Activated T-helper 1 cell treated with anti-CD3 and anti-CD28 coated beads, Interleukin-12 subunit alpha, Interleukin-12 subunit beta, Interleukin-2, Interleukin-4 antibody, amounts not matched to agents 30 ng/mL and 10 ng/mL and 1 ng/mL, durations not matched to agents 14 hours and 24 hours and 36 hours (primary cell): ENCODE measurements at regions of chr15 and their contacts with region 1.

Region 1: DNA sequence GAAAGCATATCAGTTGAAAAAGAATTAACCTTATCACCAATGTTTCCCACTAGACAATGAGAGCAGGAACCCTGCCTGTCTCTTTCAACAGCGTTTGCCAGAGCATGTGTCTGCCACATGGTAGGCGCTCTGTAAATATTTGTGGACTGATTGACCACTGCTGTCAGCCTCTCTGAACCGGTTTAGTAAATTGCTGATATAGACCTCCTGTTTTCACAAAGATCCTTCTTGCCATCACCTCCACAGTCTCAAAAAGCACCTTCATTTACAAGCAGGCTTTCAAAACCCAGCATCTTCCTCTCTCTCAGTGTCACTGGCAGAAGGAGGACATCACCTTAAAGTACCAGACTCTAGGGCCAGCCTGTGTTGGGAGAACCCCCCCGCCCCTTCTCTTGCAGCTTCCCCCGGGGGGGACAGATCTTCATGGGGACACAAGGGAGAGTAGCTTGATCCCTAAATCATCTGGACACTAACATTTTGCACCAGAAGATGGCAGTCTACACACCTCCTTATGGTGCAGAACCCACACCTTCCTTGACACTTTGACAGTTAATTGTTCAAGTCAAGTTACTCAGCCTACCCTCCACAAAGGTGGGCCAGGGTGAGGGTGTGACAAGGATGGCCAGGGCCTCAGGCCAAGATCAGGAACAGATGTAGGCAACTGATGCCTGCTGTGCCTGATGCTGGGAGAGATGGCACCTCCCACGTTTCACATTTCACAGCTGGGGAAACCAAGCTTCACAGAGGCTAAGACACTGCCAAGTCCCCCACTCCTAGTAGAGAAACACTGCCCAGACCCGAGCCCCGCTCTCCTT is 37.8 kb upstream of the USP3 start:
- DNase-seq: peak; percentile 44
- H3K4me3 Mint-ChIP-seq: no peak overlapping the region
- H3K27ac Mint-ChIP-seq: no peak overlapping the region
- H3K4me1 Mint-ChIP-seq: peaks cover 20% of the 10 kb centered on the region
- H3K27me3 Mint-ChIP-seq: peaks cover 7% of the 10 kb centered on the region

Region 2: DNA sequence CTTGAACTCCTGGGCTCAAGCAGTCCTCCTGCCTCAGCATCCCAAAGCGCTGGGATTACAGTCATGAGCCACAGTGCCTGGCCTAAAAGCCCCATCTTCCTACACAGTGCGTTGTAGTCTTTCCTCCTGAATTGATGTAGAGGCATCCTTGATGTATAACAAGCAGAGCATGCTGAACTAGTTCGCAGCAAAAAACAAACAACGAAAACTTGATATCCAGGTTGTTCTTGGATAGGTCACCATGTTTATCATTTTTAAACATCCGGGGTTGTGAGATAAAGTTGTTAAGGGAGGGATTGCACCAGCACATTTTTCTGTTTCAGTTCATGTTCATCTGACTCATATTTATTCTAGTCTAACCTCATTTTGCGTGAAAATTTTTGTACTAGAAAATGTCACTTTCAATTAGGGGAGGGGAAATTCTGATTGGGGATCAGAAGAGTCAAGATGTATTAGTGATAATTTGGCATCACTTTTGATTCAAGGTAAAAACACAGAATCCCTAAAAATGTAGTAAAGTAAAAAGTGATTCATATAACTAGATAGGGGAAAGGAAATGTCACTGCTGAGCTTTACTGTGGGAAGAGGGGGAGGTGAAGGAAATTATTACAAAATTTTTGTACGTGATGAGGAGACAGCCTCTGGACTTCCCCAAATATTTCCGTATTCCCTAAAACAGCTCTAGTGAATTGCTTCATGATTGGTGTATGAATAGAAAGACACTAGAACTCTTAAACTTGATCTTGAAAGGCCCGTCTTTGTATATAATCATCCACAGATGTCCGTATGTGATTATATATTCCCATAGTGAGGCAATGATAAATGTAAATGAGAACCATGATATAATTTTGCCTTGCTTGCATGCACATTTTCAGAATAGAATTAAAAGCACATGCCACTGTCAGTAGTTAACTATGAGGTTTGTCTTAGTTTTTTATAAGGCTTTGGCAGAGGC is 254.3 kb before region 1 on chr15:
- intact Hi-C with region 1: loop called (anchors 2 kb)
- DNase-seq: no peak
- H3K4me3 Mint-ChIP-seq: peak overlapping the region; percentile 79
- H3K27ac Mint-ChIP-seq: peak overlapping the region; percentile 98
- H3K4me1 Mint-ChIP-seq: peaks cover 68% of the 10 kb centered on the region
- H3K27me3 Mint-ChIP-seq: no peaks in the 10 kb centered on the region

Region 3: DNA sequence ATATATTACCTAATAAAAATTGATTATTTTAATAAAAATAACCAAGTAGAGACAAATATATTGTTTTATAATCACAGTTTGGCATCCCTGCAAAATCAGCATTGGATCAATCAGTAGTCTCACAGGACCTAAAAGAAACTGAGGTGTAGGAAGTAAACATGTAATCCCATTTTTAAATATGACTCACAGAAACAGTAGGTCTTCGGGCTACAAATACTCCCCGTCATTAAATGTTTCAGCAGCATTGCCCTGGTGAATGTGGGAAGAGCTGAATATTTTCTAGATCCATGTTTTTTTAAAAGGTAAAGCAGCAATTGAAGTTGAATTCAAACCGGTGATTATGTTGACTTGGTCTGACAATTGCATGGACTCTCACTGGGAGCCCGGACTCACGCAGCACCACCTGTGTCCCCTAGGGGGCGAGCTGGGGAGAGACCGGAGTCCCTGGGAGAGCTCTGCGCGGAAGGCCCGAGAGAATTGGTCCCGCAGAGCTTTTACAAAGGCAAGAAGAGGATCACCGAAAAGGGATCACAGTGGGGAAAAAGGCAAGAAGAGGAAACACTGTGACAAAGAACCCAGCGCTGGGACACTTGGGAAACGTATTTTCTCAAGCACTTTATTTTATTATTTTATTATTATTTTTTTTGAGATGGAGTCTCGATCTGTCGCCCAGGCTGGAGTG is 20.6 kb after region 1 on chr15:
- intact Hi-C with region 1: loop called (anchors 1 kb)
- DNase-seq: peak; percentile 82
- H3K4me3 Mint-ChIP-seq: peak overlapping the region; percentile 13
- H3K27ac Mint-ChIP-seq: peak overlapping the region; percentile 40
- H3K4me1 Mint-ChIP-seq: peaks cover 49% of the 10 kb centered on the region
- H3K27me3 Mint-ChIP-seq: no peaks in the 10 kb centered on the region

Region 4: DNA sequence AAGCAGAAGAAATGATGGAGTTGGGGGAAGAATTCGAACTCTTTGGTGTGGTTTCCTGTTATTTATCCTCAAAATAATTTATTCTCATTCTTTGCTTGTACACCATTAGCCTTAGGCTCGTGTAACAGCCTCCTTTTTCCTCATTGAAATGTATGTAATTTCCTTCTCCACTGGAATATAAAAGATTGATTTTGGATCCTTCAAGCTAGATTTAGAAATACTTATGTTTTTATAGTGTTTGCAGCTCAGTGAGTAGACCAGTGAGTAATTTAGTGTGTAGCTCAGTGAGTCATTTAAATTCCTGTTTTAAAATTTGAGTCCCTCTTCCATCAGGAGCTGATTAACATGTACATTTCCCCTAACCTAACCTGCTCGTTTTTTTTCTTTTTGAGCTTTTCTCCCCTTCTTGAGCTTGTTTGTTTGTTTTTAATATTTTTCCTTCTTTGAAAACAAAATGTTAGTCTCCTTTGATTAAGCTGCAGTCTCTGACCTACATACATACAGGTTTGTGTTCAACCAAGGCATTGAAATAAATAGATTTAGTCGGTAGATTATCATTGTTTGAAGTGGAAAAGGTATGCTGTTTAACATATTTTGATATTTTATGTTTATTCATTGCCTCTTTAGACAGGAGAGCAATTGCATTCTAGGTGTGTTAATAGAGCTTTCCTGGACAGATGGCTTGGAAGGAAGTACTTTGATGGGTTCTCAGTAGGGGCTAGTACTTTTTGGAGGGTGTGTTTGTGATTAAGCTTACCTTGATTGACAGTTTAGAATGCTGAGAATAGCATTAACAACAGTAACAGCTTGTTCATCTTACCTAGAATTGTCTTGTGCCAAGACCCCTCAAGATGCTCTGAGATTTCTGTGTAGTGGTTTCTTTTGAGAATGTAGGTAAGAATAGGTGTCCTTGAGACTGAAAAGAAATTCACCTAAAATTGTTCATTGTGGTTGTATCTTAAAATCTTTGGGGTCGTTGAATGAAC is 43.7 kb after region 1 on chr15:
- intact Hi-C with region 1: loop called (anchors 1 kb)
- DNase-seq: no peak
- H3K4me3 Mint-ChIP-seq: no peak overlapping the region
- H3K27ac Mint-ChIP-seq: peak overlapping the region; percentile 11
- H3K4me1 Mint-ChIP-seq: peaks cover 81% of the 10 kb centered on the region
- H3K27me3 Mint-ChIP-seq: no peaks in the 10 kb centered on the region

Region 5: GRCh38 chr15:63600616-63601025 is 134.0 kb after region 1 on chr15:
- intact Hi-C with region 1: loop called (anchors 1 kb)
- DNase-seq: peak; percentile 86
- H3K4me3 Mint-ChIP-seq: peak overlapping the region; percentile 88
- H3K27ac Mint-ChIP-seq: peak overlapping the region; percentile 87
- H3K4me1 Mint-ChIP-seq: peaks cover 51% of the 10 kb centered on the region
- H3K27me3 Mint-ChIP-seq: peaks cover 2% of the 10 kb centered on the region

Region 6: GRCh38 chr15:64153480-64154367 is 687.1 kb after region 1 on chr15:
- intact Hi-C with region 1: loop called (anchors 10 kb)
- DNase-seq: peak; percentile 87
- H3K4me3 Mint-ChIP-seq: peak overlapping the region; percentile 80
- H3K27ac Mint-ChIP-seq: peak overlapping the region; percentile 75
- H3K4me1 Mint-ChIP-seq: peaks cover 25% of the 10 kb centered on the region
- H3K27me3 Mint-ChIP-seq: peaks cover 5% of the 10 kb centered on the region

Region 7: GRCh38 chr15:64521201-64521600 is 1054.6 kb after region 1 on chr15:
- intact Hi-C with region 1: no loop called
- DNase-seq: no peak
- H3K4me3 Mint-ChIP-seq: no peak overlapping the region
- H3K27ac Mint-ChIP-seq: no peak overlapping the region
- H3K4me1 Mint-ChIP-seq: peaks cover 33% of the 10 kb centered on the region
- H3K27me3 Mint-ChIP-seq: no peaks in the 10 kb centered on the region